Activated T-helper 2 cell treated with anti-CD3 and anti-CD28 coated beads, Interferon-gamma antibody, Interleukin-2, Interleukin-4, amounts not matched to agents 10 μg/mL and 5 μg/mL and 100 μg/mL, durations not matched to agents 14 hours and 24 hours and 36 hours (primary cell): ENCODE measurements at regions of chr1 and their contacts with region 1.

Region 1: GRCh38 chr1:167617153-167618147 is 12.6 kb upstream of the RCSD1 start:
- DNase-seq: no peak
- H3K4me3 Mint-ChIP-seq: peak overlapping the region; percentile 74
- H3K27ac Mint-ChIP-seq: peak overlapping the region; percentile 91
- H3K4me1 Mint-ChIP-seq: peaks cover 52% of the 10 kb centered on the region
- H3K27me3 Mint-ChIP-seq: no peaks in the 10 kb centered on the region

Region 2: GRCh38 chr1:167599957-167600581 is 17.4 kb before region 1 on chr1:
- intact Hi-C with region 1: loop called (anchors 1 kb)
- DNase-seq: peak; percentile 38
- H3K4me3 Mint-ChIP-seq: peak overlapping the region; percentile 37
- H3K27ac Mint-ChIP-seq: peak overlapping the region; percentile 72
- H3K4me1 Mint-ChIP-seq: peaks cover 46% of the 10 kb centered on the region
- H3K27me3 Mint-ChIP-seq: no peaks in the 10 kb centered on the region

Region 3: GRCh38 chr1:167635941-167636340 is 18.5 kb after region 1 on chr1:
- intact Hi-C with region 1: loop called (anchors 2 kb)
- DNase-seq: no peak
- H3K4me3 Mint-ChIP-seq: peak overlapping the region; percentile 63
- H3K27ac Mint-ChIP-seq: peak overlapping the region; percentile 90
- H3K4me1 Mint-ChIP-seq: peaks cover 67% of the 10 kb centered on the region
- H3K27me3 Mint-ChIP-seq: no peaks in the 10 kb centered on the region

Region 4: GRCh38 chr1:167663002-167663772 is 45.7 kb after region 1 on chr1:
- intact Hi-C with region 1: no loop called
- DNase-seq: no peak
- H3K4me3 Mint-ChIP-seq: no peak overlapping the region
- H3K27ac Mint-ChIP-seq: no peak overlapping the region
- H3K4me1 Mint-ChIP-seq: peaks cover 25% of the 10 kb centered on the region
- H3K27me3 Mint-ChIP-seq: no peaks in the 10 kb centered on the region